Body of pancreas (tissue), 4 donors: ENCODE measurements at regions of chr17 and their contacts with region 1.

Region 1: DNA sequence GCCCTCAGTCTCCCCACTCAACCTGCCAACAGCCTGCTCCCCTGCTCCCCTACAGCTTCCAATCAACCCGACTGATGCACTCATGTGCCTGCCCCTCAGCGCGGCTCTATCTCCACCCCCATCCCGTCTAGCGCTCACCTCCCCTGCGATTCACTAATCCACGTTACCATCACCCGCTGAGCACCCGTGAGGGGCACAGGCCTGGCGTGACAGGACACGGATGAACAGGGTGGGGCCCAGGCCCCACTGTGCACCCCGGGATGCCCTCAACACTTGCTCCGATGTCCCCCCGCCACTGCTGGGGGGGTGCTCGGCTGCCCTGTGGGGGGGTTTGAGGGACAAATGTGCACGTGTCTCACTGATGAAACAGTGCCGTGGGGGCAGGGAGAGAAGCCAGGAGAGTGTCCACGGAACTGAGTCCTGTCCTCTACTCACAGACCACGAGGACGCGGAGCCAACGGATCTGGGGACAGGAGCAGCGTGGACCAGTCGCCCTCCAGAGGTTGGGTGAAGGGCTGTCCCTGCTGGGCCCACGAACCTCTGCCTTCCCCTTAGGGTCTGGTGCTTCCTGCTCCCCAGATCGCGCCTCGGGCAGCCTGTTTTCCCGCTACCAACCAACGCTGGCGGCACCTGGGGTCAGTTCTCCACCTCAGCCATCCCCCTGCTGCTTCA is 66.7 kb downstream of the RPH3AL start:
- DNase-seq: peak in 1 of 4 donors; percentile 13
- ATAC-seq: no peak
- H3K4me3 ChIP-seq: no peak overlapping the region
- H3K27ac ChIP-seq: no peak overlapping the region
- H3K4me1 ChIP-seq: peaks cover 8% of the 10 kb centered on the region
- H3K27me3 ChIP-seq: no peaks in the 10 kb centered on the region
- CTCF ChIP-seq: no peak
- POLR2A ChIP-seq: no peak

Region 2: GRCh38 chr17:313911-314613 is 28.2 kb after region 1 on chr17:
- intact Hi-C with region 1: loop called (anchors 2 kb)
- DNase-seq: no peak
- ATAC-seq: no peak
- H3K4me3 ChIP-seq: no peak overlapping the region
- H3K27ac ChIP-seq: no peak overlapping the region
- H3K4me1 ChIP-seq: peaks cover 19% of the 10 kb centered on the region
- H3K27me3 ChIP-seq: no peaks in the 10 kb centered on the region
- CTCF ChIP-seq: no peak
- POLR2A ChIP-seq: no peak